Activated CD8-positive, alpha-beta memory T cell treated with anti-CD3 and anti-CD28 coated beads, Interleukin-2, amount 10 ng/mL, durations not matched to agents 7 days and 5 days (primary cell): ENCODE measurements at regions of chr6 and their contacts with region 1.

Region 1: GRCh38 chr6:39263303-39264037 is 34.2 kb upstream of the KCNK5 start:
- DNase-seq: no peak
- ATAC-seq: peak; percentile 49
- H3K4me3 Mint-ChIP-seq: no peak overlapping the region
- H3K27ac Mint-ChIP-seq: no peak overlapping the region
- H3K4me1 Mint-ChIP-seq: peaks cover 12% of the 10 kb centered on the region
- H3K27me3 Mint-ChIP-seq: peaks cover 3% of the 10 kb centered on the region

Region 2: GRCh38 chr6:39102821-39103136 is 160.7 kb before region 1 on chr6:
- CTCF ChIA-PET with region 1: no interaction called
- DNase-seq: no peak
- ATAC-seq: no peak
- H3K4me3 Mint-ChIP-seq: no peak overlapping the region
- H3K27ac Mint-ChIP-seq: no peak overlapping the region
- H3K4me1 Mint-ChIP-seq: peaks cover 10% of the 10 kb centered on the region
- H3K27me3 Mint-ChIP-seq: no peaks in the 10 kb centered on the region

Region 3: DNA sequence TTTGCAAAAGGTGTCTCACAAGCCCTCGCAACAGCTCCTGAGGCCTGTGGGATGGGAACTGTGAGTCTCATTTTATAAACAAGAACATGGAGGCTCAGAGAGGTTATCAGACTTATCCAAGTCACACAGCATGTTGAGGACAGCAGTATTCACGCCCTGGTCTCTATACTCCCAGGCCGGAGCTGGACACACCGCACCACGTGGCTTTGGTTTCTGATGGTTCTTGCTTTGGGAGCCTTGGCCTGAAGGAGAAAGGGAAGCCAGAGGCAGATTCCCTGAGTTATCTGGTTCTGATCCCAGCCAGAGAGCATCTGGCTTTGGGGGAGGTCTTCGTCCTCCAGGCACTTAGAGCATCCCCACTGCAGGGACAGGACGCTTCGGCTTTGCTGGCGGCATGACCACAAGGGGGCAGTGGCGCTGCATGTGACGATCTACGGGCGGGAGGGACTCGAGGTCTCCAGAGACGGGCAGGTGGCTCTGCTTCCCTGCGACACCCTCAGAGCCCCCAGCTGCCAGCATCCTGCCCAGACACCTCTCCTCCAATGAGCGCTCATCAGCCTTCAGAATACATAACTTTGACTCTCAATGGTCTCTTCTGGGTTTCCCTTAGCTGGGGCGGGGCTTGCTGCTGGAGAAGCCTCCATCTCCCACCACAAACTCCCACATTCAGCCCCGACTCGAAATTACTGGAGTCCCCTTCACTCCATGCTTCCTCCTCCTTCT is 97.1 kb before region 1 on chr6:
- CTCF ChIA-PET with region 1: interaction called, 10 read pairs
- DNase-seq: peak; percentile 89
- ATAC-seq: peak; percentile 94
- H3K4me3 Mint-ChIP-seq: no peak overlapping the region
- H3K27ac Mint-ChIP-seq: no peak overlapping the region
- H3K4me1 Mint-ChIP-seq: peaks cover 12% of the 10 kb centered on the region
- H3K27me3 Mint-ChIP-seq: no peaks in the 10 kb centered on the region